Psoas muscle (tissue), 8 donors: ENCODE measurements at regions of chr11 and their contacts with region 1.

Region 1: GRCh38 chr11:107898270-107898669 is 30.0 kb upstream of the RAB39A start:
- DNase-seq: no peak
- ATAC-seq: peak in 2 of 4 donors; percentile 36 to 49
- H3K4me3 ChIP-seq: no peak overlapping the region
- H3K27ac ChIP-seq: no peak overlapping the region
- H3K4me1 ChIP-seq: no peaks in the 10 kb centered on the region
- H3K27me3 ChIP-seq: no peaks in the 10 kb centered on the region
- CTCF ChIP-seq: peak; percentile 49

Region 2: DNA sequence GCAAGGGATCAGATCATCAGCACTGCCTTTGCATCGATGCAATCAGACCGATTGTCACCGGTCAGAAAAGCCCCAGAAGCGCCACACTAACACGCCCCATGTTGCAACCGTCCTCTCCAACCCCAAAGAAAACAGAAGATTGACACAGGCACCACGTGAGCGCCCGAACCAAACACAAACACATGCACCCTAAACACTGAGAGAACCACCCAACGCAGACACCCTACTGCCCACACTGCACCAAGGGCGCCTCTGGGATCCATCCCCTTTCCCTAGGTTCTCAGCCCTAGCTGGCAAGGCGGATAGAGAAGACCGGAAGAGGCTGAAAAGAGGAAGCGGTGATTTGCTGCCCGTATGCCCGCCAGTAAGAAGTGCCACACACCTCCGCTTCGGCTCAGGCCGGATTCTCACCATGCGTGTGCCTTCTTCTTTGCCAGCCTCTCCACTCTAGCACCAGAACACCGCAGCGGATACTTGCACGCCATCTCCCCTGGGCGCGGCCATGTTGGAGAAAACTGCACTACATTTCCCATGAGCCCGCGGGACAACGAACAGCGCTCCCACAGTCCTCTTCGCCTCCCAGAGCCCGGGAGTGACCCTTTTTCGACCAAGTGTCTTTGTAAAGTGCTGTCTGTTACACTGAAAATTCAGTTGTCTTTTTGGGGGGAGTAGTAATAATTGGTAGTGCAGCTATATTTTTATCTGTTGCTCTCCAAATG is 332.9 kb before region 1 on chr11 and contains the start of gene ALKBH8:
- intact Hi-C with region 1: loop called in 1 of 2 experiments (anchors 10 kb)
- DNase-seq: peak; percentile 76 to 87
- ATAC-seq: peak; percentile 90 to 97 (median 92)
- H3K4me3 ChIP-seq: peak within 1 kb of the TSS; percentile 89
- H3K27ac ChIP-seq: peak within 1 kb of the TSS; percentile 94
- H3K4me1 ChIP-seq: peaks cover 30% of the 10 kb centered on the region
- H3K27me3 ChIP-seq: no peaks in the 10 kb centered on the region
- CTCF ChIP-seq: no peak
- total RNA-seq, gene ALKBH8: 6.8 to 11.6 (median 8.1) TPM

Region 3: GRCh38 chr11:107619926-107620325 is 278.3 kb before region 1 on chr11:
- intact Hi-C with region 1: no loop called
- DNase-seq: no peak
- ATAC-seq: no peak
- H3K4me3 ChIP-seq: no peak overlapping the region
- H3K27ac ChIP-seq: no peak overlapping the region
- H3K4me1 ChIP-seq: no peaks in the 10 kb centered on the region
- H3K27me3 ChIP-seq: peaks cover 0 to 2% (median 0%) of the 10 kb centered on the region in 3 donors
- CTCF ChIP-seq: no peak